Tibial artery (tissue), 4 donors: ENCODE measurements at regions of chr10 and their contacts with region 1.

Region 1: GRCh38 chr10:22988581-22989360 is 60.9 kb downstream of the ARMC3 start:
- DNase-seq: peak; percentile 38 to 68
- H3K4me3 ChIP-seq: no peak overlapping the region
- H3K27ac ChIP-seq: no peak overlapping the region
- H3K4me1 ChIP-seq: no peaks in the 10 kb centered on the region
- H3K27me3 ChIP-seq: peaks cover 0 to 4% of the 10 kb centered on the region in 2 donors
- CTCF ChIP-seq: peak; percentile 90 to 94

Region 2: GRCh38 chr10:22010973-22011408 is 977.8 kb before region 1 on chr10:
- intact Hi-C with region 1: loop called (anchors 5 kb)
- DNase-seq: no peak
- H3K4me3 ChIP-seq: no peak overlapping the region
- H3K27ac ChIP-seq: no peak overlapping the region
- H3K4me1 ChIP-seq: no peaks in the 10 kb centered on the region
- H3K27me3 ChIP-seq: no peaks in the 10 kb centered on the region
- CTCF ChIP-seq: peak; percentile 36 to 37

Region 3: DNA sequence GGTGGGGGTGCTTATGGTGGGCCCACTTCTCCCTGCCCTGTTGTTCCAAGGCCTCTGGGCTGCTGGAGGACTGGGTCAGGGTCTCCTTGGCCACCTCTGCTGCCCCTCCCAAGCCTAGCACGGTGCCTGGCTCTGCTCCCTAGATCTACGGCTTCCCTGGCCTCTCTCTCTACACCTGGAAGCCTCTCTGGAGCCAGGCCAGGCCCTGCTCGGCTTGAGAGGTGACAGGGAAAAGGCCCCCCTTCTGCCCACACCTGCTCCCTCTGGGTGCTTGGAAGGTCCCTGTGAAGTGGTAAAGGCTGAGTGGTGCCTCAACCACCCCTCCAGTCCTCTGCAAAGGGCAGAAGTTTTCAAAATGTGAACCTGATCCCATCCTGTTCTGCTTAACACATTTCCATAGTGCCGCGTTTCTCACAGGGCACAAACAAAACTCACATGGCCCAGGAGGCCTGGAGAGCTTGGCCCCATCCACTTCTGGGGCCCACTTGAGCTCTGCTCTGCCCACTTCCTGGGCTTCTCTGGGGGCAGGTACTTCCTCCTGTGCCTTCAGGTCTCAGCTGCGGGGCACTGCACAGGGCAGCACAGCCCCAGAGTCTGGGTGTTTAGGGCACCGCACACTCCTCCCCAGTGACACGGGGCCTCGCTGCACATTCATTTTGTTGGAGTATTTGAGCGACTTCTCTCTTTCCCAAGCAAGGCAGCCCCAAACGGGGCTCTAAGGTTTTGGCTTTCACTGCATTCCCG is 444.3 kb before region 1 on chr10:
- intact Hi-C with region 1: loop called (anchors 5 kb)
- DNase-seq: no peak
- H3K4me3 ChIP-seq: no peak overlapping the region
- H3K27ac ChIP-seq: no peak overlapping the region
- H3K4me1 ChIP-seq: no peaks in the 10 kb centered on the region
- H3K27me3 ChIP-seq: no peaks in the 10 kb centered on the region
- CTCF ChIP-seq: no peak